GM10248 (cell line): ENCODE measurements at regions of chr3 and their contacts with region 1.

Region 1: DNA sequence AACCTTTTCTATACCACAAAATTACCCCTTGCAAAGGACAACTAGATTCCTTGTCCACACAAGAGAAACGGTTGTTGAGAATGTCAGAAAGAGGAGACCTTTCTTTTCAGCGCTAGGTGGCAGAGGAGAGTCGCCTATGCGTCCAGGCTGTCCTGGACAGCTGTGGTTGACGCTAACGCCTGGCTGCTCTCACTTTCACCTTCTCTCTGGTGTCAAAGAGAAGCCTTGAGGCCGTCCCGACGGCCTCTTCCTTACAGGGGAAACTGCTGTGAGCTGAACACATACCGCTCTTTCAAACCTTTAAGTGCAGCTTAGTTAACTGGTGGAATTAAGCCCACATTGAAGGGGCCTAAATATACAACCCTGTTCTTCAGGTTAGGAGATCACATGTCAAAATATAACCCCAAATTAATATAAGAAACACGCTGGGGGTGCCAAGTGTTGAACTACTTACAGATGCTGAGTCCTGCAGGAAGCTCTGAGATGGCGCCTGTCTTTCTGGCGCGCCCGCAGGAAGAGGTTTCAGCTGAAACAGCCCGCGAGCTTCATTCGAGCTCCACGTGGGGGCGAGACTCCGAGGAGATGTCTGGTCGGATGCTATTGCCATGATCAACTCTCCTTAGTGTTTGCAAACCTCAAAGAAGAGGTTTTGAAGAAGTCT is 26.1 kb upstream of the KBTBD8 start:
- DNase-seq: peak; percentile 84
- CTCF ChIP-seq: peak; percentile 77

Region 2: DNA sequence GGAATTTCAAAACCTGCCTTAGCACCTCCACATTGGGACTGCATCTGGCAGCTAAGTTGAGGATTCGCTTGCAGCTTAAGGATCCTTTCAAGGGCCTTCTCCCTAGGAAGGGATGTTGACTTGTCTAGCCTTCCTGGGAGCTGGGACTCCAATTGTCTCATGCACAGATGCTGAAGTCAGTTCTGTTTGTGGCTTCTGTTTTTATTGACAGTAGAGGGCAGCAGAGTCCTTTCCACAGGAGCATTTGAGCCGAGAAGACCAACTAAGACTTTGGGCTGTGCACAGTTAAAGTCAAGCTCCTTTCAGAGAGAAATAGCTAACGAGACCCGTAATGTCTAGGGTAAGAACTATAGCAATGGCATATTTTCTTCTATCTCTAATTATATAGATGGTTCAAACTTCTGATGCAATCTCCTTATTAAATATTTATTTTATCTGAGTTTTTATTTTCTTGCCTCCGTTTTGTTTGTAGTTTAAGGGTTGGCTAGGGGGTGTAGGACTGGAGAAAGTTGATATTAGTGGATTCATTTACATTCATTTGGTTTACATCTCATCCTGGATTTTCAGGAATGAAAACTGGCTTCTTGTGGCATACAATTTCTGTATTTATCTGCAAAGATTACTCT is 33.6 kb before region 1 on chr3:
- CTCF ChIA-PET with region 1: interaction called, 10 read pairs
- POLR2A ChIA-PET with region 1: no interaction called
- DNase-seq: peak; percentile 29
- CTCF ChIP-seq: peak; percentile 68

Region 3: GRCh38 chr3:66983101-66983500 is 11.1 kb after region 1 on chr3:
- CTCF ChIA-PET with region 1: interaction called, 83 read pairs
- POLR2A ChIA-PET with region 1: no interaction called
- DNase-seq: no peak
- CTCF ChIP-seq: no peak

Region 4: GRCh38 chr3:67034371-67034770 is 62.4 kb after region 1 on chr3:
- CTCF ChIA-PET with region 1: interaction called, 10 read pairs
- POLR2A ChIA-PET with region 1: no interaction called
- DNase-seq: no peak
- CTCF ChIP-seq: no peak

Region 5: DNA sequence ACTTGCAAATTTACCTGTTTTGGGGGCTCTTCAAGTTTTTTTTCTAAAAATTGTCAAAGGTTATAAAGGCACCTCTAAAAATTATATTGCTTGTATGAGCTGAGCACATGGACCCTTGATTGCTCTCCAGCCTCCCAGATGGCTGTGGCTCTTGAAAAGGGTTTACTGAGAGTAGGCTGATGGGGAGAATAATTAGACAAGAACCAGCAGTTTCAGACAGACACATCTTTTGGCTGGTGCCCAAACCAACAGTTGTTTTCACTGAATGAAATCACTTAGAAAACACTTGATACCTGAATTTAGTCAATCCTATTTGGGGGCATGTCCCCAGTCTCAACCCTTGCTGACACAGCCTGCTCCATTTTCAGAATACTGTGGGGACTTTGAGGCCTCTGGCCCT is 243.7 kb after region 1 on chr3:
- CTCF ChIA-PET with region 1: no interaction called
- POLR2A ChIA-PET with region 1: no interaction called
- DNase-seq: no peak
- CTCF ChIP-seq: no peak

Region 6: DNA sequence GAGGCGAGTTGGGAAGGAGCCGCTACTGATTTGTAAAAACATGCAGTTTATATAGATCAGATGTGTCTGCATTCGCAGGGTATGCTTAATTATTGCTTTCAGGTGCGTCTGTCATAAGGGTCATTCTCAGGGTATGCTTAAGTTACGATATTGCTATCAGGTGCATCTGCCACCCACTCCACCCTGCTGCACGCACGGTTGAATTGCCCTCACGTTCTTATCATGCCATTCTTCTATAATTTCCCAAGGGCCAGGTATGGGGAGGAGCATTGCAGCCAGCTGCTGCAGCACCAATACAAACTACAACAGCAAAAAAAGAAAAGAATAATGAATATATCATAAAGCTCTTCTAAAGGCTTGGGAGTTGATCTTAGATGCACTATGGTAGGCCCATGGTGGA is 256.1 kb after region 1 on chr3:
- CTCF ChIA-PET with region 1: no interaction called
- POLR2A ChIA-PET with region 1: no interaction called
- DNase-seq: no peak
- CTCF ChIP-seq: no peak

Region 7: GRCh38 chr3:67790043-67790442 is 818.0 kb after region 1 on chr3:
- CTCF ChIA-PET with region 1: interaction called, 12 read pairs
- POLR2A ChIA-PET with region 1: no interaction called
- DNase-seq: peak; percentile 37
- CTCF ChIP-seq: peak; percentile 63

Region 8: DNA sequence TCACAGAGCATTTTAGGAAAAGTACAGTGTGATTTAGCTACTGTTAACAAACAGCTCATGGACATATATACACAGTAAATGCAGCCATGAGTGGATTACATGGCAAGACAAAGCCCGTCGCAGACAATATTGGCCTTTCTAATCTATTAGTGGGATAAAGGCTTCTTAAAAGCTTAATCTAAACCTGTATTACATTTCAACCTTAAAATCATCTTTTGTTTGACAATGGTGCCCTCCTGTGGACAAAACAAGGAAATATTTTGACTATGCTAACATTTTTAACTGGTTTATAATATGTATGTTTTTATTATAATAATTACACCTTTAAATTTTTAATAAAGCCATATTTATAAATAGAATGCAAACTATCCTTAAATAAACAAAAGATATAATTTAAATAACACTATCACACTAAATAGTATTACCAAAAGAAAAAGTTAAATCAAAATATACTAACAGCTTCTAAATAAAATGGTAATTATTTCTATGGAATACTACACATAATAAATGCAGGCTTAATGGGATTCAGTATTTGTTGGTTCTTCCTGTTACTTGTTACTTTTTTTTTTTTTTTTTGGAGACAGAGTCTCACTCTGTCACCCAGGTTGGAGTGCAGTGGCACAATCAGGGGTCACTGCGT is 1921.7 kb after region 1 on chr3:
- CTCF ChIA-PET with region 1: interaction called, 12 read pairs
- POLR2A ChIA-PET with region 1: no interaction called
- DNase-seq: peak; percentile 22
- CTCF ChIP-seq: peak; percentile 41